ENCODE measurements at regions of chr6 and their contacts with region 1.

Region 1: GRCh38 chr6:53484476-53485280 is 60.2 kb downstream of the GCLC start:
- DNase-seq: peak; percentile 32
- H3K4me3 Mint-ChIP-seq: no peak overlapping the region
- H3K27ac Mint-ChIP-seq: no peak overlapping the region
- H3K4me1 Mint-ChIP-seq: peaks cover 30% of the 10 kb centered on the region
- H3K27me3 Mint-ChIP-seq: peaks cover 27% of the 10 kb centered on the region

Region 2: GRCh38 chr6:52724406-52725121 is 760.1 kb before region 1 on chr6:
- intact Hi-C with region 1: loop called (anchors 1 kb)
- DNase-seq: peak; percentile 17
- H3K4me3 Mint-ChIP-seq: no peak overlapping the region
- H3K27ac Mint-ChIP-seq: no peak overlapping the region
- H3K4me1 Mint-ChIP-seq: no peaks in the 10 kb centered on the region
- H3K27me3 Mint-ChIP-seq: peaks cover 1% of the 10 kb centered on the region

Region 3: GRCh38 chr6:53171605-53172446 is 312.9 kb before region 1 on chr6:
- intact Hi-C with region 1: loop called (anchors 1 kb)
- DNase-seq: peak; percentile 82
- H3K4me3 Mint-ChIP-seq: no peak overlapping the region
- H3K27ac Mint-ChIP-seq: no peak overlapping the region
- H3K4me1 Mint-ChIP-seq: no peaks in the 10 kb centered on the region
- H3K27me3 Mint-ChIP-seq: no peaks in the 10 kb centered on the region

Region 4: DNA sequence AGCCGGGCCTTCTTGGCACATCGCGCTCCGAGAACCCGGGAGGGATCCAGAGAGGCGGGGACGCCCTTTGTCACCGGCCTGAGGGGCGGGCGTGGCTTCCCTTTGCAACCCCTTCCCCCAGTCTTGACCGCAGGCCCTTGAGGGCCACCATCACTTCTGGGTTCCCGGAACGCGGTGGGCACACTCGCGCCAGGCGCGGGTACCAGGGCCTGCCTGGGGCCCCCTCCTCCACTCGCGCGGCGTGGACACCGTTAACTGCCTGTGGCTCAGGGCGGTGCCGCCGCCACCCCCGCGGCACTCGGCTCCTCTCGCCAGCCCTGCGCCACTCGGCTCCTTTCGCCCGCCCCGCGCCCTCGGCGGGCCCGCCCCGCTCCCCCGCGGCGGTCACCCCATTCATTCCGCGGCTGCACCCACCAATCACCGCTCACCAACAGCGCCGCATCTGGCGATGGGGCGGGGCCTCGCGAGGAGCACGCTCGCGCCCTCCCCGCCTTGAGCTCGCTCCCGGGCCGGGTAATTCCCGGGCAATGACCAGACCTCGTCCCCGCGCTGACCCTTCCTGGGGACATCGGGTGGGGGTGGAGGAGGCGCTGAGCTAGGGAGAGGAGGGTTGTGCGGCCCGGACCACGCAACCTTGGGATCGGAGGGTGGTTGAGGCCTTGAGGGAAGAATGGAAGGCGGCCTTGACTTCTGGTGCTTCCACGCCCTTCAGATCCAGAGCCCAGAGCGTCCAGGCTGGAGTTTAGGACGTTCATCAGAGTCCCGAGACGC is 125.4 kb before region 1 on chr6:
- intact Hi-C with region 1: loop called (anchors 1 kb)
- DNase-seq: peak; percentile 93
- H3K4me3 Mint-ChIP-seq: peak overlapping the region; percentile 92
- H3K27ac Mint-ChIP-seq: peak overlapping the region; percentile 100
- H3K4me1 Mint-ChIP-seq: peaks cover 50% of the 10 kb centered on the region
- H3K27me3 Mint-ChIP-seq: peaks cover 5% of the 10 kb centered on the region

Region 5: DNA sequence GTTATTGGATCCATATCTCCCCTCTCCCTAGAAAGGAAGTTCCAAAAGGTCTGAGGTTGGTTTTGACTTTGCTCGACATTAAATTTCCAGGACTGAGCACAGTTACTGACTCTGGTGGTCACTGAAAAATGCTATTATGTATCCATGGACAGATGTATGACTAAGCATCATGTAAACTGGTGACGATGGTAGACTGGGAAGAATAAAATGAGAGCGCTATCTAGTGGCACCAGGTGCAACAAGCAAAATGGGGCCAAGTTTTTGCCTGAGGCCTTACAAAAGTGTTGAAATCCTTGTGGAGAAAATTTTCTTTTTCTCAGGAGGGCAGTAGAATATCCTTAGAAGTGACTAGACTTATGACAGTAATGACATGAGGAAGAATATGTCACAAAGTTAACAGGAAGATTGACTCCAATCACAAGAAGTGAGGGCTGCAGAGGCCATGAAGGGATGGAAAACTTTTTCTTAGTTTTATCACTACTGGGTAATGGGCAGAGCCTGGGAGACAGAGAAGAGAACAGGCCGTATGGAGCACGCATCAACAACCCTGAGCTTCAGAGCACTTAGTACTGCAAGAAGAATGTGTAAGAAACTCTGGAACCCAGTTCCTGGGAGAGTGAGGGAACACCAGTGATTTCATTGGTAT is 47.0 kb before region 1 on chr6:
- intact Hi-C with region 1: loop called (anchors 1 kb)
- DNase-seq: no peak
- H3K4me3 Mint-ChIP-seq: no peak overlapping the region
- H3K27ac Mint-ChIP-seq: peak overlapping the region; percentile 24
- H3K4me1 Mint-ChIP-seq: peaks cover 25% of the 10 kb centered on the region
- H3K27me3 Mint-ChIP-seq: peaks cover 4% of the 10 kb centered on the region

Region 6: GRCh38 chr6:53466271-53466670 is 18.4 kb before region 1 on chr6:
- intact Hi-C with region 1: no loop called
- DNase-seq: no peak
- H3K4me3 Mint-ChIP-seq: no peak overlapping the region
- H3K27ac Mint-ChIP-seq: no peak overlapping the region
- H3K4me1 Mint-ChIP-seq: no peaks in the 10 kb centered on the region
- H3K27me3 Mint-ChIP-seq: peaks cover 9% of the 10 kb centered on the region

Region 7: GRCh38 chr6:53792016-53792415 is 307.3 kb after region 1 on chr6:
- intact Hi-C with region 1: no loop called
- DNase-seq: no peak
- H3K4me3 Mint-ChIP-seq: no peak overlapping the region
- H3K27ac Mint-ChIP-seq: no peak overlapping the region
- H3K4me1 Mint-ChIP-seq: peaks cover 35% of the 10 kb centered on the region
- H3K27me3 Mint-ChIP-seq: peaks cover 46% of the 10 kb centered on the region

Measured in activated T-helper 1 cell treated with anti-CD3 and anti-CD28 coated beads, Interleukin-12 subunit alpha, Interleukin-12 subunit beta, Interleukin-2, Interleukin-4 antibody, amounts not matched to agents 30 ng/mL and 10 ng/mL and 1 ng/mL, durations not matched to agents 14 hours and 24 hours and 36 hours (primary cell).